ENCODE measurements at regions of chr11 and their contacts with region 1.

Region 1: DNA sequence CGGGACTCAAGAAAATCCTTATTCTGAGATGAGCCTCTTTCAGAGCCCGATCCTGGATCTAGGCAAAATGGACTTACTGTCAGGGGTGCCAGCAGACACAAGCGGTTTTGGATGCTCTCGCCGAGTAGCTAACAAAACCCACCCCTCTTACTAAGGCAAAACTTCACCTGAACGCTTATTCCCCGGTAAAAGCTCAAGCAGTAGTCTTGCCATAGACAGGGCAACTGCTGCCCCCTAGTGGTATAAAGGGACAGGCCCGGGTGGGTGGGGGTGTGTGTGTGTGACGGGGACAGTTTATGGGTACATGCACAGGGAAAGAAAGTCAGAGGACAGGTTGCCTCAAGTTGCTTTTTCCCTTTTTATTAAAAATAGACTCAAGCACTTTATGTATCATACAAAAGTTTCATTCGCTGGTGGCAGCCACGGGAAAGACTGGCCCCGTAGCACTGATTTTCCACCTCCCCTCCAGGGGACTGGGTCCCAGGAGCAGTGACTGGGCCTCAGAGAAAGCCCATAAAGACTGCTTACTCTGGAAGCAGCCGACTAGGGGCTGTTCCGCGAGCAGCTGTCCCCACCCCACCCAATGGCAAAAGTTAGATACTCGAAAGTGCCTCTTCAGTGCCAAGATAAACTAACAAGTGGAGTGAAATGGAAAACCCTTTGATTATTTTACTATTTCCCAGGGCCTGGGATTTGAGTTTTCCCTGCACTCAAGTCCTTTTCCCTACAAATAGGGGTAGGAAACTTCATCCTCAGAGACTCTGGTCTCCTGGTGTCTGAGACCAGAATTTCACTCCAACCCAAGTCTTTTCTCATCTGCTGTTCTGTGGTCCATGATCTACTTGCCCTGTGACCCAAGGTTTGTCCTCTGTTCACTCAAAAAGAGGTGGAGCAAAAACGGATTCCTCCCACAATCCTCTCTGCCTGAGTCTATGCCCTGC is 4.7 kb downstream of the YPEL4 start:
- DNase-seq: no peak
- H3K4me3 ChIP-seq: no peak overlapping the region
- CTCF ChIP-seq: peak; percentile 82

Region 2: GRCh38 chr11:57277845-57278709 is 366.9 kb before region 1 on chr11:
- CTCF ChIA-PET with region 1: no interaction called
- POLR2A ChIA-PET with region 1: no interaction called
- DNase-seq: no peak
- H3K4me3 ChIP-seq: peak overlapping the region; percentile 25; the same call in 1 of the 2 replicates
- CTCF ChIP-seq: peak; percentile 83

Region 3: GRCh38 chr11:57345555-57346211 is 299.3 kb before region 1 on chr11:
- CTCF ChIA-PET with region 1: interaction called, 131 read pairs
- POLR2A ChIA-PET with region 1: no interaction called
- DNase-seq: no peak
- H3K4me3 ChIP-seq: no peak overlapping the region
- CTCF ChIP-seq: peak; percentile 72

Region 4: DNA sequence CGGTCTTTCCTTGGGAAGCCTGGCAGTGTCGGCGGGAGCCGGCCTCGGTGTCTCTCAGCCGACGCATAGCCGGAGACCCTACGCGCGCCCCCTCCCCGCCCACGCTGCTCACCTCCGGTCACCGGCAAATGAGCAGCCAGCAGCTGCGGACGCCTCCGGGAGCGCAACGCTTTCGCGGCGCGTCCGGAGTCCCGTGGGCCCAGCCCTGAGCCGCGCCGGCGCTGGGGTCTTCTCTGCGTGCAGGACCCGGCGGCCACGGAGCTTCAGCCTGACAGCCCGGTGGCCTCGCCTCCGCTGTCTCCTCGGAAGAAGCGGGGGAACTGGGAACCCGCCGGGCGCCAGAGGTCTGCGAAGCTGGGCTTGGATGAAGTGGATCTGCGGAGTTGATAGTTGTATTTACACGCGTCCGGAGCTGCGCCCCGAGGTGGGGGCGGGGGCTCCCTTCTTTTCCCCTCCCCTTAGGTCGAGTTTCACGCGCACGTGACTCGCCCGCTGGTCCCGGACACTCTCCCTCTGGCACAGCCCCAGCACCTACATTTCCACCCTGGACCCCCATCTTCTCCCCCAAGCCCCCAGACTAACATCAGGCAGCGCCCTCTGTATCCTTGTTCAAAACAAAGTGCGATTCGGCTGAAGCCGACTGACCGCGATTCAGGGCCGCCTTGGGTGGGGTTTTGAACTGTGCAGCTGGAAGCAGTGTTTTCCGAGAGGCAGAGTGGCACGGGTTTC is 129.5 kb before region 1 on chr11 and contains the start of gene SLC43A1:
- CTCF ChIA-PET with region 1: interaction called, 21 read pairs
- POLR2A ChIA-PET with region 1: interaction called, 4 read pairs
- DNase-seq: no peak
- H3K4me3 ChIP-seq: peak within 1 kb of the TSS; percentile 85
- CTCF ChIP-seq: peak; percentile 0

Region 5: DNA sequence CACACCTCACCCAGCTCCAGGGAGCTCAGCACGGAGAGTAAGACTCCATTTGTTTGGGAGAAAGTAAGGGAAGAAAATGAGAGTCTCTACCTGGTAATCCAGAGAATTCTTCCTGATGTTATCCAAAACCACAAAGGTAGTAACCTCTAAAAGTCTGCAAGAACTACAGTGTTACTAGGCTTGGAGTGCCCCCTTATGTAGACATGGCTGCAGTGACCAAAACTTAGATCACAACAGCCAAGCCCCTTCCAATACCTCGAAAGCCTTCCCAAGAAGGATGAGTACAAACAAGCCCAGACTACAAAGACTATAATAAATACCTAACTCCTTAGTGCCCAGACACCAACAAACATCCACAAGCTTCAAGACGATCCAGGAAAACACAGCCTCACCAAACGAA is 82.4 kb before region 1 on chr11:
- CTCF ChIA-PET with region 1: interaction called, 306 read pairs
- POLR2A ChIA-PET with region 1: interaction called, 12 read pairs
- DNase-seq: no peak
- H3K4me3 ChIP-seq: no peak overlapping the region
- CTCF ChIP-seq: no peak

Region 6: DNA sequence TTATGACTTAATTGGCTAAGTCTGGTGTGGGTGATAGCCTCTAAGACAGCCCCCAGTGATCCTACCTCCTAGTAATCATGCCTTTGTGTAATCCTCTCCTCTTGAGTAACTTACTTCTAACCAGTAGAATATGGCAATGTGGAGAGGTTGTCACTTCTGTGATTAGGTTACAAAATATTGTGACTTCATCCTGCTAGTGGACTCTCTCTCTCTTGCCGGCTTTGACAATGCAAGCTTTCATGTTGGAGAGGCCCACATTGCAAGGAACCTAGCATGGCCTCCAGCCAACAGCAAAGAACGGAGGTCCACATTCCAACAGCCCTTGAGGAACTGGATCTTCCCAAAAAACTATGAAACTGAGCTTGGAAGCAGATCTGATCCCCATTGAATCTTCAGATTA is 14.8 kb before region 1 on chr11:
- CTCF ChIA-PET with region 1: interaction called, 17 read pairs
- POLR2A ChIA-PET with region 1: no interaction called
- DNase-seq: no peak
- H3K4me3 ChIP-seq: no peak overlapping the region
- CTCF ChIP-seq: no peak